Activated CD8-positive, alpha-beta T cell treated with anti-CD3 and anti-CD28 coated beads, Interleukin-2, amount 10 ng/mL, durations not matched to agents 7 days and 5 days (primary cell): ENCODE measurements at regions of chr5 and their contacts with region 1.

Region 1: GRCh38 chr5:140564196-140565023 is at the starts of genes APBB3 and SLC35A4:
- DNase-seq: peak; percentile 99
- ATAC-seq: peak; percentile 92
- H3K4me3 Mint-ChIP-seq: peak within 1 kb of the TSS; percentile 89
- H3K27ac Mint-ChIP-seq: peak within 1 kb of the TSS; percentile 93
- H3K4me1 Mint-ChIP-seq: peaks cover 54% of the 10 kb centered on the region
- H3K27me3 Mint-ChIP-seq: no peaks in the 10 kb centered on the region
- total RNA-seq, gene APBB3: 24.1 to 25.0 TPM
- total RNA-seq, gene SLC35A4: 88.9 to 98.2 TPM

Region 2: DNA sequence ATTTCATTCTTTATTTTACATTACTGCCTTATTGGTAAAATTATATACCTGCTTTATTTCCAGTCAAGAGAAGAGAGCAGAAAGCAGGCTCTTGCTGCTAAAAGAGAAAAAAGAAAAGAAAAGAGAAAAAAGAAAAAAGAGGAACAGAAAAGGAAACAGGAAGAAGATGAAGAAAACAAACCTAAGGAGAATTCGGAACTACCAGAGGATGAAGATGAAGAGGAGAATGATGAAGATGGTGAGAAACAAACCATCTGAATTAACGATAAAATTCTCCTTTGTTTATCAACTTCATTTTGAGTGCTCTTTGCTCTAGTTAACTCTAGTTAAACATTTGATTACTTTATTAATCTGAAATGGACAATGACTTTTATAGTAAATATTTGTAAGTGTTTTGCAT is 40.4 kb before region 1 on chr5:
- CTCF ChIA-PET with region 1: no interaction called
- POLR2A ChIA-PET with region 1: no interaction called
- DNase-seq: no peak
- ATAC-seq: no peak
- H3K4me3 Mint-ChIP-seq: no peak overlapping the region
- H3K27ac Mint-ChIP-seq: no peak overlapping the region
- H3K4me1 Mint-ChIP-seq: no peaks in the 10 kb centered on the region
- H3K27me3 Mint-ChIP-seq: no peaks in the 10 kb centered on the region

Region 3: GRCh38 chr5:140547508-140548299 is 16.7 kb before region 1 on chr5 and contains the start of gene EIF4EBP3:
- CTCF ChIA-PET with region 1: interaction called, 5 read pairs
- POLR2A ChIA-PET with region 1: interaction called, 19 read pairs
- DNase-seq: peak; percentile 91
- ATAC-seq: peak; percentile 97
- H3K4me3 Mint-ChIP-seq: peak within 1 kb of the TSS; percentile 80
- H3K27ac Mint-ChIP-seq: peak within 1 kb of the TSS; percentile 95
- H3K4me1 Mint-ChIP-seq: peaks cover 42% of the 10 kb centered on the region
- H3K27me3 Mint-ChIP-seq: no peaks in the 10 kb centered on the region
- total RNA-seq, gene EIF4EBP3: 7.4 to 8.6 TPM